RWPE1 (cell line): ENCODE measurements at regions of chr3 and their contacts with region 1.

Region 1: DNA sequence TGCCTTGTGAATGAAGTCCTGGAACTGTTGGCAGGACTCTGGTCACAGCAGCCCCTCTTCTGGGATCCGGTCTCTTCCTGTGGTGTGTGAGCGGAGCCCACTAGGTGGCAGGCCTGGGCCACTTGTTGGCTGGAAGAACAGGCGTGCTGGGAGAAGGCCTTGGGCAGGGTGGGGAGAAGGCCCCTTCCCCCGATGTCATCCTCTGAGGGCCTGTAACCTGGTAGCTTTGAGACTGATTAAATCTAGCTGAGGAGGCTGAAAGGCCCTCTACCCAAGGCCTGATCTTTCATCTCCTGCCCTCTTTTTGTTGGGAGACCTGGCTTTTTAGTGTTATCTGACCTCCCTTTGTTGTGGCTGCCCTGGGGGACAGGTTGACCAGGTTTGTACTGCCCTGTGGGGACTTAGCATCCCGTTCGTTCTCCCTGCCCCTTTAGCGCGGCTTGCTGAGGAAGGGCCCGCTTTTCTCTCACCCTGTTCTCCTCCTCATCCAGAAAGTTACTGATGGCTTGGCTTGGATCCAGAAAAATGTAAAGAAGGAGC is 48.3 kb downstream of the CHCHD6 start:
- DNase-seq: peak; percentile 74
- H3K27ac ChIP-seq: peak overlapping the region; percentile 97
- CTCF ChIP-seq: peak; percentile 89

Region 2: GRCh38 chr3:126558336-126559071 is 193.9 kb before region 1 on chr3 and contains the start of gene C3orf22:
- CTCF ChIA-PET with region 1: no interaction called
- POLR2A ChIA-PET with region 1: no interaction called
- DNase-seq: no peak
- H3K27ac ChIP-seq: no peak within 1 kb of the TSS
- CTCF ChIP-seq: no peak

Region 3: GRCh38 chr3:126961191-126961790 is 208.9 kb after region 1 on chr3:
- CTCF ChIA-PET with region 1: interaction called, 19 read pairs
- POLR2A ChIA-PET with region 1: interaction called, 3 read pairs
- DNase-seq: peak; percentile 83
- H3K27ac ChIP-seq: peak overlapping the region; percentile 88
- CTCF ChIP-seq: no peak

Region 4: DNA sequence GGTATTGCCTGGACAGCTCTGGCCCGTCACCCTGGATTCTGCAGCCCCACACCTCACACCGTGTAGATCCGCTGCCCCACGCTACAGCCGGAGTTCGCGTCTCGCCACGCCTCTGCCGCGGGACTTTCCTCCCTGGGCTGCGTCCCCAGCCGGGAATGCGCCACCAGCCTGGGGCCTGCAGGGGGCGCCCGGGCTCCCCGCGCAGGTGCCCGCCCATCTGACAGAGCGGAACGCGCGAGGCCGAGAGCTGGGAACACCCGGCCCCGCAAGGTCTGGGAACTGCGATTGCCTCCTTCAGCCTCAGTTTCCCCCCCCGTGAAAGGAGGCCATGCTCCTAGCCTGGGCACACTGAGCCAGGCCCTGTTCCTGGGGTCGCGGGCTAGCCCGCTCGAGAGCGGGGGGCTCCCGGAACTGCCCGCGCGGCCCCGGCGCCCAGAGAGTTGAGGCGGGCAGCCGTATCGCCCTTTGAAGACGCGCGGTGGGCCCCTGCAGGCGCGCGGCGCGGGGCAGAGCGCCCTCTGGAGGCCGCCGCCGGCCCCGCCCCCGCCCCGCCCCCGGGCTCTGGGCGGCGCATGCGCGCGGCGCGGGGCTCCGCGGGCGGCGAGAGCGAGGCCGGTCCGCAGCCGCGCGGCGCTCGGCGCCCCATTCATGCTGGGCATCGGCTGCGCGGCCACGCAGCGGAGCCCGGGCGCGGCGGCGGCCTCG is 230.2 kb after region 1 on chr3 and contains the start of gene PLXNA1:
- CTCF ChIA-PET with region 1: interaction called, 18 read pairs
- POLR2A ChIA-PET with region 1: no interaction called
- DNase-seq: peak; percentile 88
- H3K27ac ChIP-seq: peak within 1 kb of the TSS; percentile 79
- CTCF ChIP-seq: peak; percentile 91